ENCODE measurements at regions of chr11 and their contacts with region 1.

Region 1: GRCh38 chr11:16184588-16184987 is 171.8 kb downstream of the SOX6 start:
- DNase-seq: peak; percentile 94
- ATAC-seq: peak; percentile 100
- H3K4me3 ChIP-seq: peak overlapping the region in 1 of 3 experiments; percentile 27; a peak in 1 of 6 replicates
- H3K27ac ChIP-seq: peak overlapping the region; percentile 70
- H3K4me1 ChIP-seq: peaks cover 45% of the 10 kb centered on the region
- H3K27me3 ChIP-seq: no peaks in the 10 kb centered on the region
- CTCF ChIP-seq: no peak
- EP300 ChIP-seq: peak; percentile 64 to 86; a peak in 3 of 4 replicates
- POLR2A ChIP-seq: no peak
- RAD21 ChIP-seq: peak; percentile 34; the same call in 1 of the 2 replicates

Region 2: GRCh38 chr11:16126362-16126761 is 58.2 kb before region 1 on chr11:
- CTCF ChIA-PET with region 1: no interaction called
- POLR2A ChIA-PET with region 1: no interaction called
- in situ Hi-C with region 1: no loop called
- intact Hi-C with region 1: loop called (anchors 5 kb)
- DNase-seq: peak; percentile 82
- ATAC-seq: peak; percentile 93
- H3K4me3 ChIP-seq: no peak overlapping the region
- H3K27ac ChIP-seq: peak overlapping the region; percentile 13
- H3K4me1 ChIP-seq: peaks cover 30% of the 10 kb centered on the region
- H3K27me3 ChIP-seq: no peaks in the 10 kb centered on the region
- CTCF ChIP-seq: no peak
- EP300 ChIP-seq: no peak
- POLR2A ChIP-seq: no peak
- RAD21 ChIP-seq: no peak

Region 3: GRCh38 chr11:16154715-16155396 is 29.7 kb before region 1 on chr11:
- CTCF ChIA-PET with region 1: no interaction called
- POLR2A ChIA-PET with region 1: interaction called, 6 read pairs
- in situ Hi-C with region 1: no loop called
- intact Hi-C with region 1: loop called (anchors 2 kb)
- DNase-seq: peak; percentile 93
- ATAC-seq: peak; percentile 98
- H3K4me3 ChIP-seq: no peak overlapping the region; a peak in 1 of 6 replicates
- H3K27ac ChIP-seq: peak overlapping the region; percentile 82
- H3K4me1 ChIP-seq: peaks cover 58% of the 10 kb centered on the region
- H3K27me3 ChIP-seq: no peaks in the 10 kb centered on the region
- CTCF ChIP-seq: no peak
- EP300 ChIP-seq: peak; percentile 48 to 88; a peak in 3 of 4 replicates
- POLR2A ChIP-seq: no peak
- RAD21 ChIP-seq: no peak

Measured in HepG2 (cell line).